PC-9 (cell line): ENCODE measurements at regions of chr7 and their contacts with region 1.

Region 1: DNA sequence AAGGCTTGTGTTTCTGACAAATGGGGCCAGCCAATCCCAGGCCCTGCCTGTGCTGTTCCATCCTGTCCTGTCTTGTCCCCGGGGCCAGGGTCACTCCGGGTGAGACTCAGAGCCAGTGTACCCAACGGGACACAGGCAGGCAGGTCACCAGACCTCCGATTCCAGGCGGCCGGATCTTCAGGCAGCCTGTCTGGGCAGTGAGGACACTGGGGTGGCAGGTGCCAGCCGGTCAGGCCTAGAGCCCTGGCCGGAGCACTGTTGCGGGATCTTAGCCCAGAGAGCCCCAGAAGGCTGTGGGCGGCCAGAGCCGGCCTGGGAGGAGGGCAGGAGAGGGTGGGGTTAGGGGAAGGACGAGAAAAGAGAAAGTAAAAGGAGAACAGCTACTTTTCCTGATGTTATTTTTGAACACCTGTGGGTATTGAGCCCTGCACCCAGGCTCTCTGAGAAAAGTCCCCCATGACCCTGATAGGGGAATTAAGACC is 134.3 kb upstream of the TNRC18 start:
- DNase-seq: peak in 1 of 2 experiments; percentile 62
- H3K4me3 ChIP-seq: no peak overlapping the region
- H3K27ac ChIP-seq: no peak overlapping the region; the same call in 1 of the 2 replicates
- H3K4me1 ChIP-seq: peaks cover 45% of the 10 kb centered on the region
- H3K27me3 ChIP-seq: no peaks in the 10 kb centered on the region
- CTCF ChIP-seq: no peak

Region 2: GRCh38 chr7:5237286-5237685 is 320.7 kb before region 1 on chr7:
- CTCF ChIA-PET with region 1: no interaction called
- POLR2A ChIA-PET with region 1: no interaction called
- intact Hi-C with region 1: loop called (anchors 2 kb)
- DNase-seq: no peak
- H3K4me3 ChIP-seq: no peak overlapping the region
- H3K27ac ChIP-seq: no peak overlapping the region
- H3K4me1 ChIP-seq: peaks cover 19% of the 10 kb centered on the region
- H3K27me3 ChIP-seq: no peaks in the 10 kb centered on the region
- CTCF ChIP-seq: no peak

Region 3: DNA sequence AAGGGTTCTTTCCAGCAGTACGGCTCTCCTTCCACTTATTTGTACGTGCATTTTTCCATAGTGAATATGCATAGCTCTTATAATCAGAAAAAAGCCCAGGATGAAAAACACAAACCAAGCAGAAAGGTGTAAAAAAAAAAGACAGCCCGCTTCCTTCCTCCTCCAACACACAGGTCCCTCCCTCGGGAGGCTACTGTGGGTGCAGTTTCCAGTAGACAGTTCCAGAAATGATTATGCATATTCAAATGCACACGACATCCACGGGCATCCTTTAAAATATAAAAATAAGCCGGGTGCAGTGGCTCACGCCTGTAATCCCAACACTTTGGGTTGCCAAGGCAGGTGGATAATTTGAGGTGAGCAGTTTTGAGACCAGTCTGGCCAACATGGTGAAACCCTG is 194.2 kb before region 1 on chr7:
- CTCF ChIA-PET with region 1: no interaction called
- POLR2A ChIA-PET with region 1: no interaction called
- intact Hi-C with region 1: loop called (anchors 1 kb)
- DNase-seq: no peak
- H3K4me3 ChIP-seq: no peak overlapping the region
- H3K27ac ChIP-seq: no peak overlapping the region
- H3K4me1 ChIP-seq: 0 out of 2 replicates have a peak, but pooled peaks cover 5% of the 10 kb centered on the region
- H3K27me3 ChIP-seq: no peaks in the 10 kb centered on the region
- CTCF ChIP-seq: no peak

Region 4: GRCh38 chr7:5494683-5495561 is 63.0 kb before region 1 on chr7:
- CTCF ChIA-PET with region 1: interaction called, 16 read pairs
- POLR2A ChIA-PET with region 1: interaction called, 3 read pairs
- intact Hi-C with region 1: loop called (anchors 1 kb)
- DNase-seq: peak; percentile 84 to 95
- H3K4me3 ChIP-seq: peak overlapping the region; percentile 22; the same call in 1 of the 2 replicates
- H3K27ac ChIP-seq: peak overlapping the region; percentile 63
- H3K4me1 ChIP-seq: peaks cover 19% of the 10 kb centered on the region
- H3K27me3 ChIP-seq: no peaks in the 10 kb centered on the region
- CTCF ChIP-seq: peak; percentile 98

Region 5: DNA sequence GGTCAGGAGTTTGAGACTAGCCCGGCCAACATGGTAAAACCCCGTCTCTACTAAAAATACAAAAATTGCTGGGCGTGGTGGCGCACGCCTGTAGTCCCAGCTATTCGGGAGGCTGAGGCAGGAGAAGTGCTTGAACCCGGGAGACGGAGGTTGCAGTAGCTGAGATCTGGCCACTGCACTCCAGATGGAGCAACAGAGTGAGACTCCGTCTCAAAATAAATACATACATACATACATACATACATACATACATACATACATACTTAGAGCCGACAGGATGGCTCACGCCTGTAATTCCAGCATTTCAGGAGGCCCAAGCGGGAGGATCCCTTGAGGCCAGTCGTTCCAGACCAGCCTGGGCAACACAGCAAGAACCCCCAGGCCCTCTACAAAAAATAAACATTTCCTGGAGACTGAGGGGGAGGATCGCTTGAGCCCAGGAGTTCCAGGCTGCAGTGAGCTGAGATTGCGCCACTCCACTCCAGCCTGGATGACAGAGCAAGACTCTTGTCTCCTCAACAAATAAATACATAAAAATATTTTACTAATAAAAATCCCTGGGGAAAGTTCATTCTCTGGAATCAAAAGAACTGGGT is 43.4 kb before region 1 on chr7:
- CTCF ChIA-PET with region 1: no interaction called
- POLR2A ChIA-PET with region 1: interaction called, 19 read pairs
- intact Hi-C with region 1: no loop called
- DNase-seq: peak; percentile 29 to 81
- H3K4me3 ChIP-seq: peak overlapping the region; percentile 90
- H3K27ac ChIP-seq: peak overlapping the region; percentile 97
- H3K4me1 ChIP-seq: peaks cover 36% of the 10 kb centered on the region
- H3K27me3 ChIP-seq: no peaks in the 10 kb centered on the region
- CTCF ChIP-seq: no peak; the same call in 1 of the 2 replicates

Region 6: DNA sequence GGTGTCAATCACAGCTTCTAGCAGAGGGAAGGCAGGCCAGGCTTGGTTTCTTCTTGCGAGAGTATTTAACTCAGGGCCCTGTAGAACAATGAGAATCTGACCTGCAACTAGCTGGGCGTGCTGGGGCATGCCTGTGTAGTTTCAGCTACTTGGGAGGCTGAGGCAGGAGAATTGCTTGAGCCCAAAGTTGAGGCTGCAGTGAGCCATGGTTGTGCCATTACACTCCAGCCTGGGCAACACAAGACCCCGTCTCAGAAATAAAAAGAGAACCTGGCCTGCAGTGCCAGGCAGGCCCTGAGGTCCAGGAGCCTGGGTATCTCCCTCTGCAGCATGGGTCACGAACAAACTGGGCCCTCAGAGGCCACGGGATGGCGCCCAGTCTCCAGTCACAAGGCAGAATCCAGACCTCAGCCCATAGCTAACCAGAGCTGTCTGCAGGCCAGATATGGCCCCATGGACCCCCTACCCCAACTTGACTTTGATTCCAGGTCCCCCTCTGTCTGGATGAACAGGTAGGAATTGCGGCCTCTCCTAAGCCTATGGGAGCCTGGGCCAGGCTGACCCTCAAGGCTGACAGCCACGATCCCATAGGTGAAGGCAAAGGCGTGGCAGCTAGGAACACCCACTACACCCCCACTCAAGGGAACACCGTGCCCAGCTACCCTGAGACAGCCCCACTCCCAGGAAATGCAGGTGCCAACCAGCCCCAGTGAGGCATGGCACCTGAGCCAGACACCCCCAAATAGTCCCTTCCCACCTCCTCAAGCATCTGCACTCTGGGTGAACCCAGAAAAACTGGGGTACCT is 31.7 kb before region 1 on chr7:
- CTCF ChIA-PET with region 1: interaction called, 14 read pairs
- POLR2A ChIA-PET with region 1: interaction called, 17 read pairs
- intact Hi-C with region 1: no loop called
- DNase-seq: peak in 1 of 2 experiments; percentile 46
- H3K4me3 ChIP-seq: no peak overlapping the region
- H3K27ac ChIP-seq: peak overlapping the region; percentile 95
- H3K4me1 ChIP-seq: peaks cover 23% of the 10 kb centered on the region
- H3K27me3 ChIP-seq: no peaks in the 10 kb centered on the region
- CTCF ChIP-seq: peak; percentile 18; the same call in 1 of the 2 replicates

Region 7: DNA sequence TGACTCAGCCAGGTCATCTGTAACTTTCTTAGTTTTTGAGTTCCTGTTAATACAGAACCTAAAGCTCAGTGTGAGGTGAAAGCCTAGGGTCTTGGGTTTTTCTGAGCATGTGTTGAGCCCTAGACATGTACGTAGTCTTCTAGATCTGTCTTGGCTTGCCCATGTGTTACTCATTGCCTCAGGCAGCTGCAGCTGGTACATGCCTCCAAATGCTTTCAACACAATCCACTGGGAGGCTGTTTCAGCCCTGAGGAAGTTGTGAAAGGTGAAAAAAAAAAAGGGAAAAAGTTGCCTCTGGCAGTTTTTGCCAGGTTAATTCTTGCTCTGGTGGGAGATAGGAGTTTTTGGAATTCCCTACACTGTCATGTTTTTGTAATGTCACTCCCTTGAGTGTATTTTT is 88.9 kb after region 1 on chr7:
- CTCF ChIA-PET with region 1: no interaction called
- POLR2A ChIA-PET with region 1: interaction called, 15 read pairs
- intact Hi-C with region 1: no loop called
- DNase-seq: peak in 1 of 2 experiments; percentile 20
- H3K4me3 ChIP-seq: no peak overlapping the region
- H3K27ac ChIP-seq: no peak overlapping the region
- H3K4me1 ChIP-seq: peaks cover 26% of the 10 kb centered on the region
- H3K27me3 ChIP-seq: no peaks in the 10 kb centered on the region
- CTCF ChIP-seq: no peak

Region 8: DNA sequence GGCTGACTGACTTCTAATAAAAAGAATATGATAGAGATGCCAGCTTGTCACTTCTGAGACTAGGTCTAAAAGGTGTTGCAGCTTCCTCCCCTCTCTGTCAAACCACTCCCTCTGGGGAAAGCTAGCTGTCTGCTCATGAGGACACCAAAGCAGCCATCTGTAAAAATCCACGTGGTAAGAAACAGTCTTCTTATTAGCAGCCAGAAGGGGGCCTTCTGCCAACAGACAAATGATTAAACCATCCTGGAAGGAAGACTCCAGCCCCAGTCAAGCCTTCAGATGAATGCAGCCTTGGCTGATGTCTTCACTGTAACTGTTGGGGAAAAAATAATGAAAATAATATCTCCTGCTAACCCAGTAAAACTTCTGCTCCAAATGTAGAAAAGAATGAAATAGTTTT is 931.7 kb after region 1 on chr7:
- CTCF ChIA-PET with region 1: no interaction called
- POLR2A ChIA-PET with region 1: no interaction called
- intact Hi-C with region 1: no loop called
- DNase-seq: no peak
- H3K4me3 ChIP-seq: no peak overlapping the region
- H3K27ac ChIP-seq: no peak overlapping the region
- H3K4me1 ChIP-seq: peaks cover 12% of the 10 kb centered on the region
- H3K27me3 ChIP-seq: no peaks in the 10 kb centered on the region
- CTCF ChIP-seq: no peak